Adrenal gland (tissue), 19 donors: ENCODE measurements at regions of chr13 and their contacts with region 1.

Region 1: GRCh38 chr13:44435142-44435982 is 61.7 kb downstream of the SERP2 start:
- DNase-seq: peak; percentile 98 to 100 (median 99)
- H3K4me3 ChIP-seq: peak overlapping the region; percentile 18 to 75 (median 44)
- H3K27ac ChIP-seq: peak overlapping the region; percentile 72 to 96 (median 88)
- H3K4me1 ChIP-seq: peaks cover 4 to 37% of the 10 kb centered on the region in 2 donors
- H3K27me3 ChIP-seq: no peaks in the 10 kb centered on the region
- CTCF ChIP-seq: peak in 1 of 6 experiments; percentile 14
- POLR2A ChIP-seq: peak; percentile 66 to 90

Region 2: DNA sequence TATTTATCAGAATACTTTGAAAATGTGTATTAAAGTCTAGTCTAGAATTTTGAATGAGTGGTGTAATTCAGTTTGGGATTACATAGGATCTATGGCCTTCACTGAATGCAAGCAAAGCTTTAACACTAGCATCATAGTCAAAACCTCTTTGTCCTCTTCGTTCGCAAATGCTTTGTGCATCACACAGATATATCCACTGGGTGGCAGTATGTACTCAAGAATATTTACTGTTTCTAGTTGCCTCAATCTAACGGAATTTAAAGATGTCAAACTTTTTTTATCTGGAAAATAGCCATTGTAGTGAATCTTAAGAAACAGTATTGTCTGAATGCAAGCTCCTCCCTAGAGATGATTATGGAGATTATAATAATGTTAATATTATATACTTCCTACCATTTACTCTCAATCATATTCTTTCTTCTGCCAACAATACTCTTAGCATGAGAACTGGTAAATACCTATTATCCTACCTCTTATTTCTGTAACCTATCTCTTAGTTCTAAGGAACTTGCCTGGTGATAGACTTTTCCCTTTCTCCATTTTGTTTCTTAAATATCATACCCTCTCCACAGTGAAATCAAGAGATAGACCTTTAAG is 529.8 kb before region 1 on chr13:
- intact Hi-C with region 1: loop called (anchors 10 kb)
- DNase-seq: peak in 4 of 7 donors; percentile 17 to 43 (median 34)
- H3K4me3 ChIP-seq: no peak overlapping the region
- H3K27ac ChIP-seq: no peak overlapping the region
- H3K4me1 ChIP-seq: peaks cover 0 to 5% of the 10 kb centered on the region in 2 donors
- H3K27me3 ChIP-seq: no peaks in the 10 kb centered on the region
- CTCF ChIP-seq: peak; percentile 53 to 91 (median 86)
- POLR2A ChIP-seq: no peak

Region 3: GRCh38 chr13:44050450-44051063 is 384.8 kb before region 1 on chr13:
- intact Hi-C with region 1: loop called (anchors 5 to 10 kb)
- DNase-seq: peak in 1 of 7 donors; percentile 11
- H3K4me3 ChIP-seq: no peak overlapping the region
- H3K27ac ChIP-seq: no peak overlapping the region
- H3K4me1 ChIP-seq: no peaks in the 10 kb centered on the region
- H3K27me3 ChIP-seq: peaks cover 5% of the 10 kb centered on the region
- CTCF ChIP-seq: peak; percentile 51 to 88 (median 73)
- POLR2A ChIP-seq: no peak

Region 4: DNA sequence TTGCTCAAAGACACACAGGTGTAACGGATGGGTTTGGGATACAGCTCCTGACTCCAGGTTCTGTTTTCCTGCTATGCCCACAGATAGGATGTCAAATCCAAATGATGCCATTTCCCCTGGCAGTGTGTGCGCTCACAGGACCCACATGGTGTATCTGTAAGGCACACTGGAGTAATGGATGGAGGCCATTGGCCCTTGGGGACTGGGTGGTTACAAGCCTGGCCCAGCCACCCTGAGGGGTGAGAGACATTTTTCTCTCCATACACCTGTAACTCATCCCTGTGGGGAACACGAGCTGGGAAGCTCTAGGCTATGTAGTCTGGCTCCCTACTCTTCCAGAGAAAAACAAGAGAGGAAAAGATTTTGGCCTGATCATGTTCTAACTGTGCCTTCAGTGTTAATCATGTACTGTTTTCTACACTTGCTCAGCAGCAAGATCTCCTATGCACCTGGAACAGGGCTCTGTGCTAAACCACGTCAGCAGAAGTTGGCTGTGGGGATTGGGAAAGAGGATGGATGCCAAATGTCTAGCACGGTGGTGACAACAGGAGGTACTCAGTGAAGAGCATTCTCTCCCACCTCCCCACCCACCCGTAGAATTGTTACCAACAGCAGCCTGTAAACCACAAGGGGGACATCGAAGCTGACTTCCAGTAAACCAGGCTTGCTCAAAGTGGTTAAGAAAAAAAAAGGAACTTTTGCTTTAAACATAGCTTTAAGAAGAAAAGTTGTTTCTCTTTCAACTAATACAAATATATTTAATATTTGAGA is 318.6 kb before region 1 on chr13:
- intact Hi-C with region 1: no loop called
- DNase-seq: no peak
- H3K4me3 ChIP-seq: peak overlapping the region in 1 of 4 donors; percentile 0
- H3K27ac ChIP-seq: no peak overlapping the region
- H3K4me1 ChIP-seq: peaks cover 4 to 10% of the 10 kb centered on the region in 2 donors
- H3K27me3 ChIP-seq: no peaks in the 10 kb centered on the region
- CTCF ChIP-seq: peak in 1 of 6 experiments; percentile 7
- POLR2A ChIP-seq: no peak

Region 5: GRCh38 chr13:44191504-44192171 is 243.7 kb before region 1 on chr13:
- intact Hi-C with region 1: loop called in 1 of 2 experiments (anchors 10 kb)
- DNase-seq: peak; percentile 47 to 85 (median 68)
- H3K4me3 ChIP-seq: peak overlapping the region in 1 of 4 donors; percentile 46
- H3K27ac ChIP-seq: peak overlapping the region in 1 of 5 donors; percentile 32
- H3K4me1 ChIP-seq: peaks cover 0 to 4% of the 10 kb centered on the region in 2 donors
- H3K27me3 ChIP-seq: no peaks in the 10 kb centered on the region
- CTCF ChIP-seq: peak; percentile 59 to 95 (median 89)
- POLR2A ChIP-seq: no peak

Region 6: GRCh38 chr13:44243198-44243857 is 192.0 kb before region 1 on chr13:
- intact Hi-C with region 1: loop called (anchors 5 to 10 kb)
- DNase-seq: peak; percentile 85 to 91 (median 89)
- H3K4me3 ChIP-seq: no peak overlapping the region
- H3K27ac ChIP-seq: peak overlapping the region in 3 of 5 donors; percentile 28 to 50 (median 48)
- H3K4me1 ChIP-seq: peaks cover 0 to 3% of the 10 kb centered on the region in 2 donors
- H3K27me3 ChIP-seq: no peaks in the 10 kb centered on the region
- CTCF ChIP-seq: peak; percentile 29 to 73 (median 65)
- POLR2A ChIP-seq: peak in 1 of 2 donors; percentile 14